ENCODE measurements at regions of chr9 and their contacts with region 1.

Region 1: GRCh38 chr9:121322037-121322775 is 47.8 kb downstream of the STOM start:
- DNase-seq: no peak
- H3K4me3 ChIP-seq: no peak overlapping the region
- H3K27ac ChIP-seq: peak overlapping the region in 1 of 2 experiments; percentile 81; a peak in 2 of 4 replicates
- H3K4me1 ChIP-seq: peaks cover 0 to 5% of the 10 kb centered on the region in 2 experiments; a peak in 2 of 4 replicates
- H3K27me3 ChIP-seq: no peaks in the 10 kb centered on the region
- CTCF ChIP-seq: no peak
- EP300 ChIP-seq: no peak
- RAD21 ChIP-seq: no peak

Region 2: DNA sequence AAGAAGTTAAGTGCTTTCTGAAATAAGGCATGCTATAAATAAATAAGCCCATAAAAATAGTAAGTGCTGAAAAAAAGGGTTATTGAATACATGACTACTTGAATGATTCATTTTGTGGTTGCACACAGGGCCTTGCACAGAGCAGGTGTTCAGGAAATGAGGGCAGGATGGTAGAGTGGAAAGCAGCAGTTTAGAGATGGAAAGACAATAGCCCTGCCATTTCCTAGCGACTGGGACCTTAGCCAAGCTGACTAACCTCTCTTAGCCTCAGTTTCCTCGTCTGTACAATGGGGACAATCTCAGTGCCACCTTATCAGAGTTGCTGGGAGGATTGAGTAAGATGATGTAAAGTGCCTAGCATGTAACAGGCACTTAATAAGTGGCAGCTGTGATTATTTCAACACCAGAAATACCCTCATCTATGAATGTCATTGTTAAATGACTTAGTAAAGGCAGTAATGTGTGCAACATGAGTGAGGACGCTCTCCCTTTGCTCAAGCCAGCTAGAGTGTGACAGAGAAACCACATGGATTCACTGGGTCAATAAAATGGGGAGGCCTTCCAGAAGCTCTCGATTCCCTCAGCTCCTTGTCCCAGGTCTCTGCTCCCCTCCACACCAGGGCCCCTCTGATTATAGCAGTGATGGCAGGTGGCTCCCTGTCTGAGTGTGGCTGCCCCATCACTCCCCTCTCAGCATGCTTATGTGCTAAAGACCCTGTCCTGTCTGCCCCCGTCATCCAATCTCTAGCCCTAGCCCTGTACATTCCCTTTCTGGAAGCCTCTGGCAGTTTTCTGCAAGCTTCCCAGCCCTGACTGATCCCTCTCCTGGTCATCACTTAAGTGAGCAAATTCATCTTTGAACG is 429.2 kb before region 1 on chr9:
- CTCF ChIA-PET with region 1: no interaction called
- POLR2A ChIA-PET with region 1: no interaction called
- DNase-seq: no peak
- H3K4me3 ChIP-seq: no peak overlapping the region
- H3K27ac ChIP-seq: no peak overlapping the region
- H3K4me1 ChIP-seq: no peaks in the 10 kb centered on the region; a peak in 1 of 4 replicates
- H3K27me3 ChIP-seq: no peaks in the 10 kb centered on the region
- CTCF ChIP-seq: no peak
- EP300 ChIP-seq: peak in 1 of 2 experiments; percentile 78; a peak in 1 of 4 replicates
- RAD21 ChIP-seq: no peak

Region 3: GRCh38 chr9:121213136-121213806 is 108.9 kb before region 1 on chr9:
- CTCF ChIA-PET with region 1: interaction called, 45 read pairs
- POLR2A ChIA-PET with region 1: no interaction called
- DNase-seq: peak; percentile 80
- H3K4me3 ChIP-seq: no peak overlapping the region; a peak in 1 of 4 replicates
- H3K27ac ChIP-seq: no peak overlapping the region
- H3K4me1 ChIP-seq: no peaks in the 10 kb centered on the region
- H3K27me3 ChIP-seq: no peaks in the 10 kb centered on the region
- CTCF ChIP-seq: peak; percentile 96
- EP300 ChIP-seq: no peak
- RAD21 ChIP-seq: peak; percentile 94

Region 4: GRCh38 chr9:121299467-121300234 is 22.6 kb before region 1 on chr9:
- CTCF ChIA-PET with region 1: interaction called, 55 read pairs
- POLR2A ChIA-PET with region 1: no interaction called
- DNase-seq: peak; percentile 85
- H3K4me3 ChIP-seq: peak overlapping the region; percentile 47 to 50
- H3K27ac ChIP-seq: no peak overlapping the region
- H3K4me1 ChIP-seq: peaks cover 0 to 19% of the 10 kb centered on the region in 2 experiments; a peak in 2 of 4 replicates
- H3K27me3 ChIP-seq: no peaks in the 10 kb centered on the region
- CTCF ChIP-seq: no peak
- EP300 ChIP-seq: no peak
- RAD21 ChIP-seq: no peak

Region 5: DNA sequence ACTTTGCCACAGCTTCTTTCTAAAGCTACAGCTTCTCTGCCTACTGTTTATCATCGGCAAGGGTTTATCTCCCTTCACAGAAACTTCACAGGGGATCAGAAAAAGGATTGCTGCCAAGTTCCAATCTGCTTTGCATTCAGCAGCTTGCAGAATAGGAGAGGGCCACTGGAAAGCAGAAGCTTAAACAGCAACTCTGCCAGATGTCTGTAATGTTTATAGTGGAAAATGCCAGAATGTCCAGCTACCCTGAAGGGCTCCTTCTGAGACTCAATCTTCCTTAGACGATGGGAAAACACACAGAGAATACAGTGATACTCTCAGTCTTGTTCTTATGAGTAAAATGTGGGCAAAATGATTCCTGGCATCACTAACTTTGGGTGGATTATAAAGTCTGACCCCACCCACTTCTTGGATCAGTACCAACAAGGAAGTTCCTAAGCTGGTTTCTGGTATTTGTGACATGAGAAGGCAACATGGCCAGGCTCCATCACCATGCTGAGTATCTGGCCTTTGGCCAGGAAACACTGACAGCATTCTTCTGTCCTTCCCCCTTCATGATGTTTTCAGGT is 28.9 kb after region 1 on chr9:
- CTCF ChIA-PET with region 1: interaction called, 36 read pairs
- POLR2A ChIA-PET with region 1: no interaction called
- DNase-seq: peak; percentile 49
- H3K4me3 ChIP-seq: no peak overlapping the region
- H3K27ac ChIP-seq: peak overlapping the region; percentile 83 to 91
- H3K4me1 ChIP-seq: peaks cover 21 to 27% of the 10 kb centered on the region in 2 experiments; a peak in 3 of 4 replicates
- H3K27me3 ChIP-seq: no peaks in the 10 kb centered on the region
- CTCF ChIP-seq: no peak
- EP300 ChIP-seq: peak; percentile 10 to 14; a peak in 1 of 4 replicates
- RAD21 ChIP-seq: no peak

Region 6: DNA sequence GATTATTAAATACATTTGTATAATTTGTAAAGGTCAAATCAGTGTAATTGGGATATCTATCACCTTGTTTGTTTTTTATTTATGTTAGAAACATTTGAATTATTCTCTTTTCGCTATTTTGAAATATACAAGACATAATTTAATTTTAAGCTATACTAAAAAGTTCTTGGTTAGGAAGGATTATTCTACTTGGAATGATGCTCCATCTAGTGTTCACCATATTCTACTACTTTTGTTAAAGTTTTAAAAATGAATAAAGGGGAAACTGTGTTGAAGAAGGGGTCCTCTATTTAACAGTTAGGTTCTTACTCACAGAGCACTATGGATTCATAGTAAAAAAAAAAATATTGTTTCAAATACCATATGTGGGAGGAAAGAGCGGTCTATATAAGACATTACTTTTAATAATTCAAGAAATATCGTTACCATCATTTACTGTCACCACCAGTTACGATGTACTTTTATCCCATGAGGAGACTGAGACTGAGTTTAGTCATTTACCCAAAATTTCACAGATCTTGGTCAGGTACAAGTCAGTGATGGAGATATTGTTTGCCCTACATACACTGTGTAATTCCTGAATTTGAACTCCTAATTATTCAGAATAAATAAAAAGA is 54.1 kb after region 1 on chr9:
- CTCF ChIA-PET with region 1: interaction called, 97 read pairs
- POLR2A ChIA-PET with region 1: no interaction called
- DNase-seq: peak; percentile 29
- H3K4me3 ChIP-seq: no peak overlapping the region; a peak in 1 of 4 replicates
- H3K27ac ChIP-seq: no peak overlapping the region
- H3K4me1 ChIP-seq: peaks cover 14 to 20% of the 10 kb centered on the region in 2 experiments; a peak in 3 of 4 replicates
- H3K27me3 ChIP-seq: no peaks in the 10 kb centered on the region
- CTCF ChIP-seq: peak; percentile 71
- EP300 ChIP-seq: no peak
- RAD21 ChIP-seq: peak; percentile 58

Region 7: DNA sequence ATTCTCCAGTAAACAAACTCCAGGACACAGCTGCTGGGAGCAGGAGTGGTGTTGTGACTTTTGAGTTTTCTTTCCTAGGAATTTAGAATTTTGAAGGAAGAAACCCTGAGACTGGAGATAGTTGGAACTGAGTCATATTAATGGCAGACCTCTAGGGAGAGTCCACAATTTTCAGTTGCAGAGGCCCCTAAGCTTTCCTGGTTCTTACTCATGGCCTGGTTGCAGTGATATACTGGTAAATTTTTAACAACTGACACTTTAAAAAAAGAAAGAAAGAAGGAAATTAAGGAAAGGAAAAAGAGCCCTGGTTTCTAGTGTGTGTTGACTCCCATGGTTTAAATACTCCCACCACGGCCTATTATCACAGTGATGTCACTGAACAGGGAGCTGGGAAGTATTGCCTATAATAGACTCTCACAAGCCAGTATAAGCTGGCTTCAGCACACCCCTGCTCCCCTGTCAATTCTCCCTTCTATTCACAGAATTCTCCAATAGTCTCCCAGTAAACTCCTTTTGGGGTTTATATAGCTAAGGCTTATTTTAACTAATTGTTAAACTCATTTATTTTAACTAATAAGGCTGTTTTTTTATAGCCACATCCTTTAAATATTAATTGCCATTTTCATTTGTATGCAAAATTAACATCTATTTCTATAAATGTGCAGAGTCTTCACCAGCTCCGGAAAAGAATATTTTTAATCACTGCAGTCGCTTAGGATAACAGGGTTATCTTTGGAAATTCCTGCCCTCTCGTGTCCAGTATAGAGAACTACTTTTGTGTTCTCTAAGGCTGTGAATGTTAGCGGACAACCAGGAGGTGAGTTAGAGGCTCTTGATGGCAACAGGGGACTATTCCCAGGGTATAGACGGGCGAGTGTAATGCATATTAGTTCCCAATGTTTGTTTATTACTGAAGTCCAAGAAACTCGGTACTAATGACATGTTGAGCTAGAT is 117.8 kb after region 1 on chr9:
- CTCF ChIA-PET with region 1: interaction called, 13 read pairs
- POLR2A ChIA-PET with region 1: no interaction called
- DNase-seq: peak; percentile 33
- H3K4me3 ChIP-seq: no peak overlapping the region; a peak in 1 of 4 replicates
- H3K27ac ChIP-seq: no peak overlapping the region
- H3K4me1 ChIP-seq: no peaks in the 10 kb centered on the region
- H3K27me3 ChIP-seq: peaks cover 17% of the 10 kb centered on the region; the same call in 1 of the 2 replicates
- CTCF ChIP-seq: peak; percentile 53
- EP300 ChIP-seq: no peak
- RAD21 ChIP-seq: peak; percentile 45

Region 8: DNA sequence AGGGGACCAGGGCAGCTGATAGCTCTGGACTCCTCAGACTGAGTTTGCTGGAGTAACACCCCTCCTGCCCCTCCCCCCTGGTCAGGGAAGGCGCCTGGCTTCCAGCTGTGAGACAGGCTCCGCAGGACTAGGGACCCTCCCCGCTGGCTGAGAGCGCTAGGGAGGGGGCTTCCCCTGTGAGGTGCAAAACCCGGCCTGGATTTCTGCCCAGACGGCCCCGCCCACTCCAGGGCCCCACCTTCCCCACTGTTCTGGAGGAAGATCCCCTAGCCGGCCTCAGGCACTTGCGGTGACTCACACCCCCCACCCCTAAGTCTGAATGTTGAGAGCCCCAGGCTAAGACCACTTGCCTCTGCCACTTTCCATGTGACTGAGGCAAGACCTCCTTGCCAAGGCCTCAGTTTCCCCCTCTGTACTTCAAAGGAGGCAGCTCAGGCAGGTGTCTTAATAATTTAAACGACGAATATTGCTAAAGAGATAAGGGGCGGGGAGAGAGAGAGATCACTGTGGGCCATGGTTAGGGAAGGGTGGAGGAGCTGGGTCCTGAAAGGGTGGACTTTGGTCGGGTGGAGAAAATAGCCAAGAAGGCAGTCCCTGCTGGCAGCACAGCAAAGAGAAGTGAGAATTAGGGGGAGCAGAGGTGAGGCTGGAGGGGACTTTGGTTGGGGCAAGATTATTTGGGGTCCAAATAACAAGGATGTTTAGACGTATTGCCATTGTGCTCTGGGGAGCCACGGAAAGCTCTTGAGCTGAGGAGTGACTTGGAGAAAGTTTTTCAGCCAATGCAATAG is 328.2 kb after region 1 on chr9:
- CTCF ChIA-PET with region 1: no interaction called
- POLR2A ChIA-PET with region 1: no interaction called
- DNase-seq: peak; percentile 91
- H3K4me3 ChIP-seq: no peak overlapping the region
- H3K27ac ChIP-seq: peak overlapping the region in 1 of 2 experiments; percentile 94; a peak in 3 of 4 replicates
- H3K4me1 ChIP-seq: peaks cover 12 to 74% of the 10 kb centered on the region in 2 experiments
- H3K27me3 ChIP-seq: no peaks in the 10 kb centered on the region
- CTCF ChIP-seq: no peak
- EP300 ChIP-seq: peak; percentile 40 to 53; a peak in 2 of 4 replicates
- RAD21 ChIP-seq: peak; percentile 23; the same call in 1 of the 2 replicates

Measured in SK-N-SH (cell line).